ENCODE measurements at regions of chr5 and their contacts with region 1.

Region 1: DNA sequence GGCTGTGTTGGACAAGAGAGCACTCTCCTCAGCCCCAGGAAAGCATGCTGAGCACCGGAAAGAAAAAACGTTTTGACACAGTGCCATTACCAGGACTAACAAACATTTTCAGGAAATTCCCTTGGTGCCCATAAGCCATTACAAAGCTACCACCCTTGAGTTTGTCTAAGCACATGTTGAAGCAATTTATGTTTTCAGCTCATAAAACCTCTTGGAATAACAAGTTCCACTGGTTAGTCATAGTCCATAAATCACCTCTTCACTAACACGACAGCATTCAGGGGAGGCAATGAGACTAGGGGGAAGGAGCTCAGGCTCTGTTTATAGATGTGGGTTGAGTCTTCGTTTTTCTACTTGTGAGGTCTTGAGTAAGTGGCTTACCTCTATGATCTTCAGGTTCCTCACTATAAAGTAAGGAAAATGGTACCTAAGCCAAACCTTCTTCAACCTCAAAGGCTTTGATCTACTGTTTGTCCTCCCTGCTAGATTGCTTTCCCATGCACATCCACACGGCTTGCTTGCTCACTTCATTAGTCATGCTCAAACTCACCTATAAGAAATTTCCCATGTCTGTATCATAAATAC is 65.4 kb downstream of the DRD1 start:
- DNase-seq: peak; percentile 84 to 97
- ATAC-seq: peak; percentile 95 to 98
- H3K4me3 ChIP-seq: no peak overlapping the region
- H3K27ac ChIP-seq: peak overlapping the region; percentile 83 to 87
- H3K4me1 ChIP-seq: peaks cover 37% of the 10 kb centered on the region
- CTCF ChIP-seq: no peak
- EP300 ChIP-seq: peak; percentile 97 to 98
- POLR2A ChIP-seq: no peak
- RAD21 ChIP-seq: peak; percentile 34 to 72

Region 2: DNA sequence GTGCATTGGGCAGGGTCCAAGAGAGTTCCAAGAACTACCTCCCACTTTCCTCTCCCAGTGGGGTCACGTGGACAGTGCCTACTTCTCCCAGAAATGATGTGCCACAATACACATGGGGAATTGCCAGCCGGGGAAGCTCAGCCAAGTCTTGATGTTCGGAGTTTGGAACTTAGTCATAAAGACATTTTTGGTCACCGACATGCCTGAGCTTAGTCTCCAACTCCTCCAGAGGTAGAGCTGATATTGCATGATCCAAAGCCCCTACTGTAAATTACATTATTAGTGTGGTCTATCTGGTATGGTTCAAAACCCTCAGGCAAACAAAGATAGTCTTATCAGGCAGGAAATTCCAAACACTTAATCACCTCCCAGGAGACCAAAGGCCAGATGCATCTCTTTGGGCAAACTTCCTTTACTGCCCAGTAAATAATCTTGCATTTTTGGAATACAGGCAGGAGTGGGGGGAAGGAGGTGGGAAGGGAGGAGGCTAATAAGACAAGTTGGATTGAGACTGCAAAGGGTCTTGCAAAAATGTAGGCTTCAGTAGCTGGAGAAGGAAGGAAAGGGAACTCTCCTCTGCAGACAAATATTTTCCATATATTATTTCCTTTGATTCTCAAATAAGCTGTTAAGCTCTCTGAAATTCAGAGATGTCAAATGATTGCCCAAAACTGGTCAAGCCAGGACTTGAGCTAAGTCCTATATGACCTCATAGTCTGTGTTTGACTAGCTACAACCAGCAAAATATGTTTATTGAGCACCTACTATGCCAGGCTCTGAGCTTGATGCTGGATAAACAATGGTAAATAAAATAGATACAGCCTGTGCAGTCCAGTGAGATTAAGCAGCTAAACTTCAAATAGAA is 34.0 kb before region 1 on chr5:
- CTCF ChIA-PET with region 1: interaction called, 13 read pairs
- POLR2A ChIA-PET with region 1: interaction called, 40 read pairs
- DNase-seq: peak; percentile 40 to 82
- ATAC-seq: peak; percentile 83 to 85
- H3K4me3 ChIP-seq: no peak overlapping the region
- H3K27ac ChIP-seq: peak overlapping the region; percentile 77 to 88; a peak in 5 of 6 replicates
- H3K4me1 ChIP-seq: peaks cover 52% of the 10 kb centered on the region
- CTCF ChIP-seq: no peak
- EP300 ChIP-seq: peak; percentile 91 to 95; a peak in 4 of 5 replicates
- POLR2A ChIP-seq: no peak
- RAD21 ChIP-seq: peak; percentile 32 to 66